H1 (cell line): ENCODE measurements at regions of chr12 and their contacts with region 1.

Region 1: DNA sequence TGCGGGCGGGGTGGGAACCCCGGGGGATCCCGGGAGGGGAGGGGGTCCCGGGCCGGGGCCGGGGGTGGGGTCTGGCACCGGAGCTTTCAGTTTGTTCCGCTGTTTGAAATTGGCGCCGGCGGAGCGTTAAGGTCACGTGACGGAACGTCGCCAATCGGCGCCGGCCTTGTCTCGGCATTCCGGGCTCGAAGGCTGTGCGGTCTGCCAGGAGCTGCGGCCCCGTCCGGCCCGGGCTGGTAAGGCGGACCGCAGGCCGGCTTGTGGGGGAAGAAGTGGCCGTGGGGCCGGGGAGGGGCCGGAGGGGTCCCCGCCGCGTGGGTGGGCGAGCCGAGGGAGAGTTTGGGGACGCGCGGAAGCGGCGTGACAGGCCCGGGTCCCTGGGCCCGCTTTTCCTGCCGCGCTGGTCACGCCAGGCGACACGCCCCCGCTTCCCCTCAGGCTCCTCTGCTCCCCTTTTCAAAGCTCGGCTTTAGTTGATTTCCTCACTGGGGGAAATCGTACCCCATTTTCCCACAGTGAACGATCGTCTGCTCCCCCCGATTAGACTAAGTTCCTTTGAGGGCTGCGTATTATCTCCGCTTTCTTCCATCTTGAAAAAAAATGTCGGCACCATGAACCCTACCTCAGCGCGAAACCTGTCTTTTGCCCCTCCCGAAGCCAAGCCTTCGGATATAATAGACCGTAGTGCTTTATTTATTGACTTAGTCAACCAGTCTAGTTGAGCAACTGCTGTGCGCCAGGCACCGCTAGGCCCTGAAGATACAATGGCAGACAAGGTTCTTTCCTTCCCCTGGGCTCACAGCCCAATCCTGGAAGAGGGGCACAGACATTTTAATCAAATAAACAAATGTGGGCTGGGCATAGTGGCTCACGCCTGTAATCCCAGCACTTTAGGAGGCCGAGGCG is at the starts of genes FOXM1 and RHNO1:
- DNase-seq: peak; percentile 74 to 94
- H3K4me3 ChIP-seq: peak within 1 kb of the TSS; percentile 92 to 100 (median 98)
- H3K27ac ChIP-seq: peak within 1 kb of the TSS; percentile 86
- H3K4me1 ChIP-seq: peaks cover 0 to 4% (median 3%) of the 10 kb centered on the region in 4 experiments; a peak in 4 of 7 replicates
- H3K27me3 ChIP-seq: no peaks in the 10 kb centered on the region
- CTCF ChIP-seq: no peak
- EP300 ChIP-seq: no peak
- POLR2A ChIP-seq: peak in 1 of 2 experiments; percentile 81; a peak in 2 of 3 replicates
- RAD21 ChIP-seq: no peak
- total RNA-seq, gene FOXM1: 118 and 121 TPM in 2 replicates
- total RNA-seq, gene RHNO1: 41.9 and 55.8 TPM in 2 replicates

Region 2: GRCh38 chr12:2752676-2753371 is 124.5 kb before region 1 on chr12:
- CTCF ChIA-PET with region 1: no interaction called
- POLR2A ChIA-PET with region 1: no interaction called
- DNase-seq: peak; percentile 74 to 97
- H3K4me3 ChIP-seq: peak overlapping the region in 3 of 4 experiments; percentile 5 to 45 (median 14); a peak in 5 of 8 replicates
- H3K27ac ChIP-seq: no peak overlapping the region
- H3K4me1 ChIP-seq: peaks cover 6 to 18% (median 15%) of the 10 kb centered on the region in 4 experiments
- H3K27me3 ChIP-seq: peaks cover 0 to 9% (median 8%) of the 10 kb centered on the region in 4 experiments; a peak in 4 of 7 replicates
- CTCF ChIP-seq: peak in 2 of 3 experiments; percentile 1 to 25; a peak in 2 of 4 replicates
- EP300 ChIP-seq: peak in 1 of 2 experiments; percentile 68; a peak in 1 of 3 replicates
- POLR2A ChIP-seq: no peak
- RAD21 ChIP-seq: peak; percentile 20 to 42; a peak in 2 of 4 replicates

Region 3: GRCh38 chr12:2853626-2854025 is 23.7 kb before region 1 on chr12:
- CTCF ChIA-PET with region 1: interaction called, 13 read pairs
- POLR2A ChIA-PET with region 1: interaction called, 31 read pairs
- DNase-seq: peak; percentile 82 to 98
- H3K4me3 ChIP-seq: no peak overlapping the region
- H3K27ac ChIP-seq: no peak overlapping the region
- H3K4me1 ChIP-seq: peaks cover 0 to 6% (median under 1%) of the 10 kb centered on the region in 4 experiments; a peak in 4 of 7 replicates
- H3K27me3 ChIP-seq: no peaks in the 10 kb centered on the region
- CTCF ChIP-seq: peak; percentile 91 to 97 (median 93)
- EP300 ChIP-seq: peak in 1 of 2 experiments; percentile 20; a peak in 1 of 3 replicates
- POLR2A ChIP-seq: no peak
- RAD21 ChIP-seq: peak; percentile 68 to 73

Region 4: DNA sequence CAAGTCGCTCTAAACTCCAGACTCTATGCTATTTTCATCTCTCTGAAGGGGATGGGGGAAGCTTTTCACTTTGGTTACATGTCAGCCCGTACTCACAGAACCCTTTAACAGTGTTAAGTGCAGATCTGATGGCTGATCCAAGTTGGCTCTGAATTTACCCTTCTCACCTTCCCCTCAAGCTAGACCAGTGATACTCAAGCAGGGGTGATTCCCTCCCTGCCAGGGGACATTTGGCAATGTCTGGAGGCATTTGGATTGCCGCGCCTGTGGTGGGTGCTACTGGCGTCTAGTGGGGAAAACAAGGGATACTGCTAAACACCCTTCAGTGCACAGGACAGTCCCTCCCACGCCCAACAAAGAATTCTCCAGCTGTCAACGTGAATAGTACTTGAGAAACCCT is 14.4 kb before region 1 on chr12:
- CTCF ChIA-PET with region 1: interaction called, 14 read pairs
- POLR2A ChIA-PET with region 1: interaction called, 31 read pairs
- DNase-seq: no peak
- H3K4me3 ChIP-seq: no peak overlapping the region
- H3K27ac ChIP-seq: no peak overlapping the region
- H3K4me1 ChIP-seq: no peaks in the 10 kb centered on the region
- H3K27me3 ChIP-seq: no peaks in the 10 kb centered on the region
- CTCF ChIP-seq: no peak
- EP300 ChIP-seq: no peak
- POLR2A ChIP-seq: no peak
- RAD21 ChIP-seq: no peak

Region 5: GRCh38 chr12:2890388-2891239 is 13.3 kb after region 1 on chr12 and contains the start of gene TULP3:
- CTCF ChIA-PET with region 1: interaction called, 9 read pairs
- POLR2A ChIA-PET with region 1: interaction called, 26 read pairs
- DNase-seq: peak; percentile 78 to 98
- H3K4me3 ChIP-seq: peak within 1 kb of the TSS; percentile 71 to 88 (median 86)
- H3K27ac ChIP-seq: peak within 1 kb of the TSS; percentile 57; the same call in 1 of the 2 replicates
- H3K4me1 ChIP-seq: peaks cover 0 to 3% (median 2%) of the 10 kb centered on the region in 4 experiments; a peak in 3 of 7 replicates
- H3K27me3 ChIP-seq: no peaks in the 10 kb centered on the region
- CTCF ChIP-seq: no peak
- EP300 ChIP-seq: no peak
- POLR2A ChIP-seq: peak in 1 of 2 experiments; percentile 74; a peak in 2 of 3 replicates
- RAD21 ChIP-seq: no peak
- total RNA-seq, gene TULP3: 18.4 and 21.7 TPM in 2 replicates